ENCODE measurements at regions of chr22 and their contacts with region 1.

Region 1: DNA sequence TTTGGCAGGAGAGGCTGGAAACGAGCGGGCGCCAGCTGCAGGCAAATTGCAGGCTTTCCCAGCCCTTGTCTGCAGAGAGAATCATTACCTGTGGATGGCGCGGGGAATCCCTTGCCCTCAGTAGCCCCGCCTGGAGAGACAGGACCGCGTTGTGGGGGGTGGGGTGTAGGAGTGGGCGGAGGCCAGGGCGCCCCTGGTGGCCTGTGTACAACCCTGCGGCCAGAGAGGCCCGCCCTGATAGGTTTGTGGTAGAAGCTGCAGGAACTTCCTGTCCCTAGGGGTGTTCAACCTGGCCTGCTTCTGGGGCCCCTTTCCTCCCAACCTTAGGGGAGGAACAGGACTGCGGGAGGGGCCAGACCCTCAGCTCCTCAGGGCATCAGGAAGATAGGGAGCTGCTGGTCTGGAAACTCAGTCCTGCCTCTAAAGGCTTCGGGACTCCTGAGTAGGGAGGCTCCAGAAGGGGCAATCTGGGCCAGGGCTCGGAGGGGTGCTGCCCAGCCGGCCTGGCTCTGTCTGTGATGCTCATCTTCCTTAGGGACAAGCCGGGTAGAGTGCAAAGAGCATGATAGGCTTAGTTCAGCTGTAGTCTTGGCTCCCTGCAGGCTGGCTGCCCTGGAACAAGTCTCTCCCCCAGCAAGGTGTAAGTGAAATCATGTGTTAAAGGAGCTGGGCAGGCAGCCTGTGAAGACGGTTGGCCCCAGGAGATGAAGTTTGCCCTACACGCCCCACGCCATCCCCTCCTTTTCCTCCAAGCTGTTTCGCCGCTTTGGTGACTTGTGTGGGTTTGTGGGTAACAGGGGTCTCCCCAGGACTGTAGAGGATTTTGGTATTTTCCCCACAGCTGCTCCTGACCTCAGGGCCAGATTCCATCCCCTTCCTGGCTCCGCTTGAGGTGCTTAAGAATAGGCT is 24.1 kb upstream of the SUSD2 start:
- DNase-seq: peak; percentile 94
- ATAC-seq: peak; percentile 79

Region 2: GRCh38 chr22:24106385-24107381 is 50.5 kb before region 1 on chr22:
- intact Hi-C with region 1: loop called (anchors 5 kb)
- DNase-seq: no peak
- ATAC-seq: peak; percentile 4

Region 3: DNA sequence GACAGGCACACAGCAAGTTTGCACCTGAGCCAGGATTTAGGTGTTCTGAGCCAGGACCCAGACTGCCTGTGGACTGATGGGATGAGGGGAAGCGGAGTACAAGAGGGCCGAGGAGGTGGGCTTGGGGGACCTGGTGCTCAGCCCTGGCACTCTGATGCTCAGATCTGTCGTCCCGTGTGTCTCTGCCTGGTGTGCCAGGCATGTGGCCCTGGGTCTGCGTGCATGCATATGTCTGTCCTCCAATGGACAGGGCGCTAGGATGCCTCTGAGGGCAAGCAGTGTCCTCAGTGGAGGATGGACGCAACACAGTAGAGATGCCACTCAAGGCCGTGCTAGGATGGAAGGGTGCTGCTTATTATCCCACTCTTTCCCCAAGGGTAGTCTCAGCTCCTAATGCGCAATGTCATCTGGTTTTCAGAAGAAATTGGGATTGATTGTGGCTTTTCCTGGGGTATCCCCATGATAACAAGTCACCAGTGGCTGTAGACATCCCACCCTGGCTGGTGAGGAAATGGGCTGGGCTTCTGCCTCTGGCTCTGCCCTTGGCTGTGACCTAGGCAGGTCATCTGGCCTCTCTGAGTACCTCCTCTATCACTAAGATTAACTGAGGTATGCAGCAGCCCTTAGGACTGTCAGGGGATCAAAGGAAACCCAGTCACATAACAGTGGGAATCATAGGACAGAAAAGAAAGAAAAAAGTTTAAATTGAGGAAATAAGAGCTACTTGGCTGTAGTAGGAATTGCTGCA is 11.5 kb before region 1 on chr22:
- intact Hi-C with region 1: loop called (anchors 2 kb)
- DNase-seq: peak; percentile 60
- ATAC-seq: peak; percentile 41

Measured in Right ventricle myocardium inferior (tissue), 1 donor.